Calu3 (cell line): ENCODE measurements at regions of chr1 and their contacts with region 1.

Region 1: GRCh38 chr1:240027059-240027462 is 64.6 kb upstream of the FMN2 start:
- DNase-seq: peak; percentile 56
- H3K4me3 Mint-ChIP-seq: no peak overlapping the region
- H3K27ac Mint-ChIP-seq: no peak overlapping the region
- H3K4me1 Mint-ChIP-seq: peaks cover 25% of the 10 kb centered on the region
- H3K27me3 Mint-ChIP-seq: no peaks in the 10 kb centered on the region
- CTCF ChIP-seq: peak; percentile 90

Region 2: DNA sequence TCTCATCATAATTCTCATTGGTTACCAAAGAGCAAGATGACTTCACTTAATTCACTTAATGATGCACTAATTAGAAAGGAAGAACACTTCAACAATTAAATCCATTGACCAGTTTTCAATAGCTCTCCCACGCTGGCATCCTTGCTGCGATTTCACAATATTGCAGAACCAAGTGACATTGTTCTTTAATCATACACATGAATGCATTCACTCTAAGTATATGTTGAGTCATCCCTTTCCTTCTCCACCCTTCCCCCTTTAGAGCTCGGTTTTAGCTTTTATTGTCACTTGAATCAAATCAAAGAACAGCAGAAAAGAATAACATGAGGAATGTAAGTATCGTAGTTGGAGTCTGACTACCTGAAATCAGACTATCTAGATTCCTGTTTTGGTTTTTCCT is 169.0 kb before region 1 on chr1:
- CTCF ChIA-PET with region 1: no interaction called
- intact Hi-C with region 1: no loop called
- DNase-seq: peak; percentile 36
- H3K4me3 Mint-ChIP-seq: peak overlapping the region; percentile 46
- H3K27ac Mint-ChIP-seq: peak overlapping the region; percentile 90
- H3K4me1 Mint-ChIP-seq: peaks cover 23% of the 10 kb centered on the region
- H3K27me3 Mint-ChIP-seq: no peaks in the 10 kb centered on the region
- CTCF ChIP-seq: no peak

Region 3: GRCh38 chr1:239976130-239976968 is 50.7 kb before region 1 on chr1:
- CTCF ChIA-PET with region 1: interaction called, 12 read pairs
- intact Hi-C with region 1: no loop called
- DNase-seq: peak; percentile 73
- H3K4me3 Mint-ChIP-seq: no peak overlapping the region
- H3K27ac Mint-ChIP-seq: no peak overlapping the region
- H3K4me1 Mint-ChIP-seq: no peaks in the 10 kb centered on the region
- H3K27me3 Mint-ChIP-seq: peaks cover 11% of the 10 kb centered on the region
- CTCF ChIP-seq: peak; percentile 95

Region 4: GRCh38 chr1:240149484-240150094 is 122.5 kb after region 1 on chr1:
- CTCF ChIA-PET with region 1: interaction called, 6 read pairs
- intact Hi-C with region 1: loop called (anchors 1 kb)
- DNase-seq: peak; percentile 34
- H3K4me3 Mint-ChIP-seq: no peak overlapping the region
- H3K27ac Mint-ChIP-seq: no peak overlapping the region
- H3K4me1 Mint-ChIP-seq: no peaks in the 10 kb centered on the region
- H3K27me3 Mint-ChIP-seq: peaks cover 17% of the 10 kb centered on the region
- CTCF ChIP-seq: peak; percentile 64

Region 5: DNA sequence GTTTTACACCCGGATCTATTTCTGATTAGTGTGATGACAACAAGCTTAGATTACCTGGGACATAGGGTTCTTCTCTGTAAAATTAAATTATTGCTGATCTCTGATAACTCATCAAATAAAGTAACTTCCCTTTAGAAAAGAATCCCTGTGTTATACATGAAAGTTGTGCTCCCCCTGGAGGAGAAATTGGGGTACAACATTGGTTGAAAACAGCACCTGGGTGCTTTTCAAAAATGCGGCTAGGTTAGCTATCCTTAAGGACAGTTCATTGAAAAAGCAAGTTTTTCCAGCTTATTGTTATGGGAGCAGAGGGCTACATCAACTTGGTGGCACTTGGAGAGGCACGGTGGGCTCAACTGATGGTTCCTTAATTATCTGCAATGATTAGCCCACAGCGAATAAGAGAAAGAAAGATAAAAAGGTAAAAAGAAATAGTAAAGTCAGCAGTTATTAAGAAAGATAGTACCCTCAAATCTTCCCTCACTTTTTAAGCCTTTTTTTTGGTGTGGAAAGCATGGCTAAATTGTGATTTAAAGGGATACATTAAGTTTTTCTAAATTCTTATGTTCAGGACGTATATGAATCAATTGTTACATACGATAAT is 162.4 kb after region 1 on chr1:
- CTCF ChIA-PET with region 1: interaction called, 3 read pairs
- intact Hi-C with region 1: loop called (anchors 1 kb)
- DNase-seq: peak; percentile 67
- H3K4me3 Mint-ChIP-seq: peak overlapping the region; percentile 19
- H3K27ac Mint-ChIP-seq: peak overlapping the region; percentile 16
- H3K4me1 Mint-ChIP-seq: peaks cover 9% of the 10 kb centered on the region
- H3K27me3 Mint-ChIP-seq: peaks cover 25% of the 10 kb centered on the region
- CTCF ChIP-seq: peak; percentile 56

Region 6: DNA sequence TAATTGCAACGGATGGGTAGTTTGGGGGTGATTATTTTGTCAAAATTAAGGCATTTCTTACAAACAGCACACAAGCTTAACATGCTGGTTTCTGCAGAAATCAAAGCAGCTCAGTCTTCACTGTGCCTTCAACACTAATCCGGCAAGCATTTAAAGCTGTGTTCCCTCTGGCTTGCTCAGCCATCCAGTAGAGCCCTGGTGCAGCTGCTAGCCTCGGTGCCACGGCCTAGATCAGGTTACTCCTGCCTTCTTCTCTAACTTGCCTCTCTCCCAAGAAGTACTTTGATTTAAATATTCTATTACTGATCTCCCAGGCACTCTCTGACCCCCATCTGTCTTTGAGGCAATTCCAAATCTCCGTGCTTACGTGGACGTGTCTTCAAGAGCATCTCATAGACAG is 499.3 kb after region 1 on chr1:
- CTCF ChIA-PET with region 1: no interaction called
- intact Hi-C with region 1: loop called (anchors 10 kb)
- DNase-seq: no peak
- H3K4me3 Mint-ChIP-seq: no peak overlapping the region
- H3K27ac Mint-ChIP-seq: no peak overlapping the region
- H3K4me1 Mint-ChIP-seq: peaks cover 8% of the 10 kb centered on the region
- H3K27me3 Mint-ChIP-seq: no peaks in the 10 kb centered on the region
- CTCF ChIP-seq: no peak

Region 7: GRCh38 chr1:240611619-240612480 is 584.8 kb after region 1 on chr1 and contains the start of gene GREM2:
- CTCF ChIA-PET with region 1: no interaction called
- intact Hi-C with region 1: loop called (anchors 2 kb)
- DNase-seq: peak; percentile 54
- H3K4me3 Mint-ChIP-seq: peak within 1 kb of the TSS; percentile 86
- H3K27ac Mint-ChIP-seq: peak within 1 kb of the TSS; percentile 6
- H3K4me1 Mint-ChIP-seq: peaks cover 26% of the 10 kb centered on the region
- H3K27me3 Mint-ChIP-seq: peaks cover 55% of the 10 kb centered on the region
- CTCF ChIP-seq: no peak
- total RNA-seq, gene GREM2: not detected in 2 replicates

Region 8: DNA sequence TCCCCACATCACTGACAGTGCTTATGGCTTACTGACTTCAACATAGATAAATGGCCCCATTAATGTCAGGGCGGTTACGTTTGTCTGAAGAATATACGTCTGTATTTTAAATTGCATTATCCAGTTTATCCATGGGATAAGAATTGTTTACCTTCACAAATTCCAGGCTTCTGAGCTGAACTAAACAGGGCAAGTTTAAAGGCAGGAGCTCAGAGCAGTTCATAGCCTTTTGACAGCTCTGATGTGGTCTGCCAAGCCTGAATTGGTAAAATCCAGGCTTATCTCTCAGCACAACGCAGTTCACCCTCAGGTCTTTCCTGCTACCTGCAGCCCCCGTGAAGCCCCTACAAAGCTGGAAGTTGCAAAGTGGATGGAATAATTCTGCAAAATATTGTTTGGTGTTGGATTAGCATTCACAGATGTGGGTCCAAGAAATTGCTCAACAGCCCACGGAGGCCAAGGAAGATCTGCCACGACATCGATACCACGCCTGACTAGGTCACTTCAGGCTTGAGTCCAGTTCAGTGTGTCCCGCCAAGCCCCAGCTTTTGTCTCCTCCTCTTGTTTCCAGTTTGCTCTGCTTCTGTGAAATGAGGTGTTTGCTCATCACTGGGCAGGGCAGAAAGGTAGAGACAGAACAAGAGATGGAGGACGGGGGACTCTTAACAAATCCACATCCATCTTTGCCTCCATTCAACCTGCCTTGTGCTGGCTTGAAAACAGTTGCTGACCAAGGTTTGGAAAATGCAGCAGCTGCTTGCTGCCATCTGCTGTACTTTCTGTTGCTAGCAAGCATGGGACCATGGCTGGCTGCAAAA is 664.7 kb after region 1 on chr1:
- CTCF ChIA-PET with region 1: no interaction called
- intact Hi-C with region 1: loop called (anchors 5 kb)
- DNase-seq: peak; percentile 38
- H3K4me3 Mint-ChIP-seq: no peak overlapping the region
- H3K27ac Mint-ChIP-seq: no peak overlapping the region
- H3K4me1 Mint-ChIP-seq: no peaks in the 10 kb centered on the region
- H3K27me3 Mint-ChIP-seq: no peaks in the 10 kb centered on the region
- CTCF ChIP-seq: peak; percentile 41